Tibial artery (tissue), 4 donors: ENCODE measurements at regions of chr6 and their contacts with region 1.

Region 1: GRCh38 chr6:6547110-6547879 is 41.2 kb upstream of the LY86 start:
- DNase-seq: peak; percentile 88 to 93
- H3K4me3 ChIP-seq: peak overlapping the region; percentile 39 to 57
- H3K27ac ChIP-seq: no peak overlapping the region
- H3K4me1 ChIP-seq: peaks cover 4 to 12% (median 9%) of the 10 kb centered on the region in 4 donors
- H3K27me3 ChIP-seq: peaks cover 0 to 20% of the 10 kb centered on the region in 2 donors
- CTCF ChIP-seq: peak; percentile 90

Region 2: GRCh38 chr6:5143634-5144311 is 1403.5 kb before region 1 on chr6:
- intact Hi-C with region 1: loop called (anchors 10 kb)
- DNase-seq: peak; percentile 86 to 89
- H3K4me3 ChIP-seq: no peak overlapping the region
- H3K27ac ChIP-seq: no peak overlapping the region
- H3K4me1 ChIP-seq: no peaks in the 10 kb centered on the region
- H3K27me3 ChIP-seq: no peaks in the 10 kb centered on the region
- CTCF ChIP-seq: peak; percentile 87 to 92

Region 3: DNA sequence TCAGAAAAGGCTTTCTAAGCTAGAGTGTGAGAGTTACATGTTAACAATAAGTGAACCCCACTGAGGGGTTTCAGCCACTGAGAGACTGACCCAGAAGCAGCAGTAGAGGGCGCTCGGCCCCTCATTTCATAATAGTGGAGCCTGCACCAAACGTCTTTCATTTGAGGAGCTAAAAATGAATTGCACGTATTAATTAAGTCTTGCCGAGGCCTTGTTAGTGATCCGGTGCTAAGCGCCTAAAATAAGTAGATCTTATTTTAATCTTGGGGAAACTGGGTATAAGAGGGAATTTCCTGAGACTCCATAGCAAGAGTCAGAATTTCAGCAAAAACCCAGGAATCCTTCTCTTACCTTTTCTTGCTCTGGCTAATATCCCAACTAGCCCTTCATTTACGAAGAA is 1076.3 kb before region 1 on chr6:
- intact Hi-C with region 1: loop called (anchors 10 kb)
- DNase-seq: peak in 1 of 2 donors; percentile 36
- H3K4me3 ChIP-seq: no peak overlapping the region
- H3K27ac ChIP-seq: no peak overlapping the region
- H3K4me1 ChIP-seq: peaks cover 0 to 4% (median 0%) of the 10 kb centered on the region in 4 donors
- H3K27me3 ChIP-seq: no peaks in the 10 kb centered on the region
- CTCF ChIP-seq: peak; percentile 56 to 69

Region 4: GRCh38 chr6:6057424-6058053 is 489.8 kb before region 1 on chr6:
- intact Hi-C with region 1: loop called (anchors 10 kb)
- DNase-seq: no peak
- H3K4me3 ChIP-seq: no peak overlapping the region
- H3K27ac ChIP-seq: no peak overlapping the region
- H3K4me1 ChIP-seq: no peaks in the 10 kb centered on the region
- H3K27me3 ChIP-seq: peaks cover 0 to 8% of the 10 kb centered on the region in 2 donors
- CTCF ChIP-seq: peak; percentile 52 to 63